ENCODE measurements at regions of chr6 and their contacts with region 1.

Region 1: DNA sequence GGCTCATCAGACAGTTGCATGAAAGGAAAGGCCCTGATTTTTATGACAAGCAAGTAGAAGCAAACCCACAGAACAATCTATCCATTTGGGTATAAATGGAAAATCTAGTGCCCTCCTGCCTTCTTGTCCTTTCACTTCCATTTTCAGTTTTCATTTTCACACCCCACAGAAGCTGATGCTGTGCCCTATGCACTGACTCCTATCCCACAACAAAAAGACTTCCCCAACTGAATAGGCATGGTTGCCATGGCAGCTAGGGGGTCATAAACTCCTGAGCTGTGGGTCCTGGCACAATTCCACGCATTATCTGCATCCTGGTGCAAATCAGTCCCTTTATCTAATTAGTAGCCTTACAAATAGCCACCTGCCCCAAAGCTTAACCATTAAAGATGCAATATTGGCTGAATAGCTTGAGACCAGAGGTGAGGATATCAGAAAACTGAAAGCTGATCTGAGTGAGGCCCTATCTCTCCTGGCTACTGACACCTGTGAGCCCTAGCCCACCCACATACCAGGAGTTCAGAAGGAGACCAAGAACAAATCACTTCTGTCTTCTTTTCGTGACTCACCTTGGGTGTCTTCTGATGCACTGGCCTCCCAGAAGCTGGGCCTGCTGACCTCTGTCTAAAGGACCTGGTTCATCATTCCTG is 34.9 kb upstream of the HEY2 start:
- DNase-seq: no peak
- H3K4me3 ChIP-seq: no peak overlapping the region
- H3K27me3 ChIP-seq: no peaks in the 10 kb centered on the region
- CTCF ChIP-seq: no peak

Region 2: GRCh38 chr6:125732398-125732797 is 17.8 kb after region 1 on chr6:
- CTCF ChIA-PET with region 1: no interaction called
- POLR2A ChIA-PET with region 1: no interaction called
- DNase-seq: no peak
- H3K4me3 ChIP-seq: no peak overlapping the region
- H3K27me3 ChIP-seq: no peaks in the 10 kb centered on the region; the same call in 1 of the 2 replicates
- CTCF ChIP-seq: no peak

Region 3: DNA sequence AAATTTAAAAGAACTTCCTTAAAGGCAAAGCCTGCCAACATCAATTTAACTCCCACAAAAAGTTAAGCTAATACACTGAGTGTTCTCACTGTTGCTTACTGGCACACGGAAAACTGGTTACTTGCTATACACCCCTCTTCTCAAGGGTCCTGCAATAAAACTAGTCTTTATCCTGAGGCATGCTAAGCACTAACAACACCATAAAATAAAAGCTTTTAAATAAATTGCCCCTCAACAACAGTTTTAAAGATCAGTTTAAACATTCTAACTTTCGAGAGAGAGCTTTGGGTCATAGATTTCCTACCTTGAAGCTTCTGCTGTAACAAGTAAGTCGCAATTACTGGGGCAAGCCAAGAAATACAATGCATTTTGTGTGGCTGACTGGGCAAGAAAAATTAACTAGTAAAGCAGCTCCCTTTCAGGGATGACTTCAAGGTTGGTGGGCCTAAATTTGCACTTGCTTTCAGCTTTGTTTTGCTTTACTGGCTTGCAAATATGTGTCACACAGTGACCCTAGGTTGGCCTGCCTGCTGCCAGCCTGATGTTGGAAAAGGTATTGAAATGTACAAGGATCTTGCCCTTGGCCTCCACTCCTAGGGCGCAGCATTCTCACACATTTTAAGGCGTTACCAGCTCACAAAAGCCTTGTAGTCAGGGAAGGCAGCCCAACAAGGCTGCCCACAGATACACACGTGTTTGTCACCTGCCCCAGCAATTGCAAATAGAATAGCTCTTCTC is 30.9 kb after region 1 on chr6:
- CTCF ChIA-PET with region 1: no interaction called
- POLR2A ChIA-PET with region 1: interaction called, 17 read pairs
- DNase-seq: no peak
- H3K4me3 ChIP-seq: no peak overlapping the region
- H3K27me3 ChIP-seq: peaks cover 40% of the 10 kb centered on the region
- CTCF ChIP-seq: no peak

Measured in BJ (cell line).